ENCODE measurements at regions of chr10 and their contacts with region 1.

Region 1: DNA sequence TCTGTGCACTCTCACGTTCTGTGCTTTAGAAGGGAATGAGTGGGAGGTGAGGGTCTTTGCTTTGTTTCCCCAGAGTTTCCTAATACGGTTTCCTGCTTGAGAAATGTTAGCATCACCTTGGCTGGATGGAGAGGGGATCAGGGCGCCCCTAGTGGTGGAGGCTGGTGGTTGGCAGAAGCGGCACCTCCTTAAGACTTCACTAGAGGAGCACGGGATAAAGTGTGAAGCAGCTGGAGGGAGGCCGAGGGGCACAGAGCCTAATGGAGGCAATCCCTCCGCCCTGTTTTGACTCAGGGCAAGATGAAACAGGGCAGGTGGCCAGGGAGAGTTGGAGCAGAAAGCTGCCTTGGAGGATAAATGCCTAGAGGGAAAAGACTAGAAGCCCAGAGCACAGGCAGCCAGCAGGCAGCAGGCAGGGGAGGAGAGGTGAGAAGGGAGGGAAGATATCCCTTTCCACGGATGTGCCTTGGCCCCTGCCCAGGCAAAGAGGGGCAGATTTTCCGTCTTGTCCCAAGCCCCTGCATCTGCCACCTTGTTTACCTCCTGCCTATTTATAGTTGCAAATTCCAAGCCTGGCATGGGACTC is 56.0 kb upstream of the BTRC start:
- DNase-seq: peak; percentile 75
- H3K4me3 Mint-ChIP-seq: no peak overlapping the region
- H3K27ac Mint-ChIP-seq: no peak overlapping the region
- H3K4me1 Mint-ChIP-seq: peaks cover 18% of the 10 kb centered on the region
- H3K27me3 Mint-ChIP-seq: peaks cover 90% of the 10 kb centered on the region
- CTCF ChIP-seq: peak; percentile 72

Region 2: DNA sequence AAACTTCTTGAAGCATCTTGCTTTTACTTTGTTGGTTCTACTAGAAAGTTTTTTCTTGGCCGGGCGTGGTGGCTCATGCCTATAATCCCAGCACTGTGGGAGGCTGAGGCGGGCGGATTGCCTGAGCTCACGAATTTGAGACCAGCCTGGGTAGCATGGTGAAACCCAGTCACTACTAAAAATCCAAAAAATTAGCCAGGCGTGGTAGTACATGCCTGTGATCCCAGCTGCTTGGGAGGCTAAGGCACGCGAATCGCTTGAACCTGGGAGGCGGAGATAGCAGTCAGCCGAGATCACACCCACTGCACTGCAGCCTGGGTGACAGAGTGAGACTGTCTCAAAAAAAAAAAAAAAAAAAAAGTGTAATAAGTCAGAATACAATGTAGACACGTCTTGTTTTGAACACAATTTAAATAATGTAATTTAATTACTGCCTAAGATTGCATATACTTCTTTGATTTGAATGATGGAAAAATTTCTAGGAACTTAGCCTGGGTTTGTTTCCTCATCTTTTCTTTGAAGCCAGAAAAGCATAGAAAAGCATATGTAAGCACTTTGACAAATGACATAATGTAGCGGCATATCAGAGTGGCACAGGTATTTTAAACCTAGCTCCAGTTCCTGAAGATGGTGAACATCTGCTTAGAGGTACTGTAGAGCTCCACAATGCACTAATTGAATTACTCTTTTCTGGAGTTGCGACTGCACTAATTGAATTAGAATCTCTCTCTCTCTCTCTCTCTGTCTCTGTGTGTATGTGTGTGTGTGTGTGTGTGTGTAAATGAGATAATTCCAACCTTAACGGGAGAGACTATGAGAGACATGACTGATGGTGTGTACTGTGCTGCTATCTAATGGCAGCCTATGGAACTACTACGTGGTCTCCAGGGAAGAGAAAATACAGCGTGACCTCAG is 143.8 kb after region 1 on chr10:
- CTCF ChIA-PET with region 1: interaction called, 29 read pairs
- intact Hi-C with region 1: loop called (anchors 1 kb)
- DNase-seq: peak; percentile 20
- H3K4me3 Mint-ChIP-seq: no peak overlapping the region
- H3K27ac Mint-ChIP-seq: no peak overlapping the region
- H3K4me1 Mint-ChIP-seq: no peaks in the 10 kb centered on the region
- H3K27me3 Mint-ChIP-seq: no peaks in the 10 kb centered on the region
- CTCF ChIP-seq: peak; percentile 39

Region 3: GRCh38 chr10:101453791-101454718 is 156.1 kb after region 1 on chr10:
- CTCF ChIA-PET with region 1: no interaction called
- intact Hi-C with region 1: no loop called
- DNase-seq: no peak
- H3K4me3 Mint-ChIP-seq: no peak overlapping the region
- H3K27ac Mint-ChIP-seq: no peak overlapping the region
- H3K4me1 Mint-ChIP-seq: no peaks in the 10 kb centered on the region
- H3K27me3 Mint-ChIP-seq: no peaks in the 10 kb centered on the region
- CTCF ChIP-seq: no peak

Region 4: DNA sequence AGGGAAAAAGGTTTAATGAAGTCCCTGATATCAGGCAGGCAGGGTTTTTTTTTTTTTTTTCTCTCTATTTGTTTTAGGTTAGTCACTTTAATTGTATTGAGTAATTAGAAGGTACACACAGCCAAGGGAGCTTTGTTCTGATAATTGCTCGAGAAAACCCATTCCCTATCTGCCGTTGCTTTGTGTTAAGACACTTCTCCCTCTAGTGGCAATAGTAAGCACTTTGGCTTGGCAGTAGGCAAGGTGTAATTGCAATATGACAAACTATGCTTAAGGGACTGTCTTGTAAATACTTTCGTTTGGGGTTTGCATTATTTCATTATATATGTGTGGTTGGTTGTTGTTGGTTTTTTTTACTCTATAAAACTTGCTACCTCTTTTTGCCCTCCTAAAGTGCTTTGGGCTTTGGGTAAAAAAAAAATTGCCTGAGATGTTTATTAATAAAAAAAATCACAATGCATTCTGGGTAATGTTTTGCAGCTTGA is 169.3 kb after region 1 on chr10:
- CTCF ChIA-PET with region 1: interaction called, 21 read pairs
- intact Hi-C with region 1: loop called (anchors 2 kb)
- DNase-seq: peak; percentile 25
- H3K4me3 Mint-ChIP-seq: no peak overlapping the region
- H3K27ac Mint-ChIP-seq: no peak overlapping the region
- H3K4me1 Mint-ChIP-seq: no peaks in the 10 kb centered on the region
- H3K27me3 Mint-ChIP-seq: no peaks in the 10 kb centered on the region
- CTCF ChIP-seq: peak; percentile 37

Region 5: DNA sequence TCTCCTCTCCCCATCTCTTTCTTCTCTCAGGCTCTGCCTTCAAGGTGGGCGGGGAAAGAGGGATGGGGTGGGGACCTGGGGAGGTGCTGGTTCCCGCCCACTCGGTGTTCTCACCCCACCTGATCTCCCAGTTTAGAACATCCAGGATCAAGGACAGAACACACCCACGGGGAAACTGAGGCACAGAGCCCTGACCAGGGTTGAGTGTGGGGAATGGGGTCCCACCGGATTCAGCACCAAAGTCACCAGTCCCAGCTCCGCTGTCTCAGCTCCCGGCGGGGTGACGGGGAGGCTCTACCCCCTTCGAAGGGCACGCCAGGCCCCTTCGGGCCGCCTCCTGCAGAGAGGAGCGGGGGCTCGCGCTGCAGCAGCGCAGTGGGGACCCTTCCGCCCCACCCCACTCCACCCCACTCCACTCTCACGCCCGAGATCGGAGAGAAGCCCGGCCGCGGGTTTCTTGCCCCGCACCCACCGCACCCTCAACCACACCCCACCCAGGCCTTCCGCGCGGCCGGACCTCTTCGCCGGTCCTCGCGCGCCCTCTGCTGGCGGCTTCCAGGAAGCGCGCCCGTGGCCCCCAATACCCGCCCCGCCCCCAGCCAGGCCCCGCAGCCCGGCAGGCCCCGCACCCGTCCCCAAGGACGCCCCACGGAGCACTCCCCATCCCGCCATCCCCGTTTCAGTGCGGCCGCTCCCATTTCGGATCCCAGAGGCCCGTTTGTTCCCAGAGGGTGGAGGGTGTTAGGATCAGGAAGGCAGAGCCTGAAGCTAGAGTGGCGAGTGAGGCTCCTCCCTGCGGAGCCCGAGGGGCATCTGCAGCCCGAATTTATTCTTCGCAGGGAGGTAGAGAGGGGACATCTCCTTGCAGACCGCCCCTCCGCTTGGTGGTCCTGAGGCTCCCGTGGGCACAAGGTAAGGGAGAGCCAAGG is 272.1 kb after region 1 on chr10:
- CTCF ChIA-PET with region 1: interaction called, 11 read pairs
- intact Hi-C with region 1: loop called (anchors 5 kb)
- DNase-seq: peak; percentile 76
- H3K4me3 Mint-ChIP-seq: peak overlapping the region; percentile 75
- H3K27ac Mint-ChIP-seq: no peak overlapping the region
- H3K4me1 Mint-ChIP-seq: no peaks in the 10 kb centered on the region
- H3K27me3 Mint-ChIP-seq: peaks cover 63% of the 10 kb centered on the region
- CTCF ChIP-seq: peak; percentile 85

Region 6: DNA sequence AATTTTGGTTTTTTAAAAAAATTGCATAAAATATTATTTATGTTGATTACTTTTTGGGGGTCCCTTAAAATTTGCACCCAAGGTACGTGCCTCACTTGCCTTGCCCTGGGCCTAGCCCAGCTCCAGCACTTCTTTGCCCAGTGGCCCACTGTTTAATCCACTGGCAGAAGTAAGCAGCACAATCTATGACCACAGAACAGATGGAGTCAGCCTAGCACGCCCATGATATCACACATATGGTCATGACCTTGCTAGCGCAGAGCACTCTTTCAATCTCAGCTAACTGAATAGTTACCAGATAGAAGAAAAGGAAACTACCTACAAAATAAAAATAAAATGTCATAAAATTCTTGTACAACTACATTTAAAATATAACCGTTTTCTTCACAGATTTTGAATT is 514.6 kb after region 1 on chr10:
- CTCF ChIA-PET with region 1: no interaction called
- intact Hi-C with region 1: no loop called
- DNase-seq: no peak
- H3K4me3 Mint-ChIP-seq: no peak overlapping the region
- H3K27ac Mint-ChIP-seq: no peak overlapping the region
- H3K4me1 Mint-ChIP-seq: peaks cover 7% of the 10 kb centered on the region
- H3K27me3 Mint-ChIP-seq: no peaks in the 10 kb centered on the region
- CTCF ChIP-seq: no peak

Measured in Calu3 (cell line).